ENCODE measurements at regions of chr2 and their contacts with region 1.

Region 1: GRCh38 chr2:202299712-202300111 is 34.1 kb downstream of the NOP58 start:
- DNase-seq: no peak
- ATAC-seq: peak; percentile 54
- H3K4me3 Mint-ChIP-seq: no peak overlapping the region
- H3K27ac Mint-ChIP-seq: peak overlapping the region; percentile 28
- H3K4me1 Mint-ChIP-seq: peaks cover 7% of the 10 kb centered on the region
- H3K27me3 Mint-ChIP-seq: no peaks in the 10 kb centered on the region
- CTCF ChIP-seq: no peak

Region 2: GRCh38 chr2:201490291-201490690 is 809.4 kb before region 1 on chr2:
- CTCF ChIA-PET with region 1: no interaction called
- POLR2A ChIA-PET with region 1: no interaction called
- intact Hi-C with region 1: no loop called
- DNase-seq: no peak
- ATAC-seq: no peak
- H3K4me3 Mint-ChIP-seq: no peak overlapping the region
- H3K27ac Mint-ChIP-seq: no peak overlapping the region
- H3K4me1 Mint-ChIP-seq: no peaks in the 10 kb centered on the region
- H3K27me3 Mint-ChIP-seq: no peaks in the 10 kb centered on the region
- CTCF ChIP-seq: no peak

Region 3: DNA sequence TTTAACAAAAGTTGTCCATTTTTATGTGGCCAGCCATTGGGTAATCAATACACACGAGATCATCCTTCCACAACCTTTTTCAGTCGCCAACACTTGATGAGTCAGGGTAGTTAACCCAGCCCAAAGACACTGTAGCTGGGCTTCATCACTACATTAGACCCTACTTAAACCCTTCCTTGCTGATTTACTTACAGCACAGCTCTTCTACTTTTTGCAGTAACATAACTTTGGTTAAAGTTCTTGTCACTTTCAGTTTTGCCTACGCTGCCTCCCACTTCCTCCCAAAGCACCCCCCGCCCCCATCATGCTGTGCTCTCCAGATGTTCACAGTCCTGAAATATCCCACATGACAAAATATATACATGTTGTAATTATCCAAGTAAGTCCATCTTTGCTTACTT is 389.8 kb before region 1 on chr2:
- CTCF ChIA-PET with region 1: no interaction called
- POLR2A ChIA-PET with region 1: no interaction called
- intact Hi-C with region 1: no loop called
- DNase-seq: no peak
- ATAC-seq: no peak
- H3K4me3 Mint-ChIP-seq: no peak overlapping the region
- H3K27ac Mint-ChIP-seq: no peak overlapping the region
- H3K4me1 Mint-ChIP-seq: peaks cover 10% of the 10 kb centered on the region
- H3K27me3 Mint-ChIP-seq: peaks cover 13% of the 10 kb centered on the region
- CTCF ChIP-seq: no peak

Region 4: GRCh38 chr2:202278944-202279343 is 20.8 kb before region 1 on chr2:
- CTCF ChIA-PET with region 1: no interaction called
- POLR2A ChIA-PET with region 1: interaction called, 5 read pairs
- intact Hi-C with region 1: loop called (anchors 2 kb)
- DNase-seq: no peak
- ATAC-seq: no peak
- H3K4me3 Mint-ChIP-seq: no peak overlapping the region
- H3K27ac Mint-ChIP-seq: no peak overlapping the region
- H3K4me1 Mint-ChIP-seq: peaks cover 10% of the 10 kb centered on the region
- H3K27me3 Mint-ChIP-seq: no peaks in the 10 kb centered on the region
- CTCF ChIP-seq: no peak

Region 5: DNA sequence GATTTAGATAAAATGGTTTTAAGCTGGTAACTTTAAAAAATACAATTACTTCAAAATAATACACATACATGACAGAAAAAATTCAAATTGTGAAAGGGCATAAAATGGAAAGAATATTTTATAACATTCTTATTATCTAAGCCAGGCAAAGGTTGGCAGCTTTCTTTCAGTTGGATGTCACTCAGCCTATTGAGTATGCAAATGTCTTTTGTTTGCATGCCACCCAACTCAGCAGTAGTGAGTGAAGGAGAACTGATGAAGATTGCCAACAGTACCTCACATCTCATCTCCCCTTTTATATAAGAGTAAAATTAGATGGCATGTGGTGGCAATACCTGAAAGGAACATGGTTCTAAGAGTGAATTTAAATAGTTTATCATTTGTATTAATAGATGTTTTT is 101.2 kb after region 1 on chr2:
- CTCF ChIA-PET with region 1: no interaction called
- POLR2A ChIA-PET with region 1: no interaction called
- intact Hi-C with region 1: no loop called
- DNase-seq: no peak
- ATAC-seq: no peak
- H3K4me3 Mint-ChIP-seq: no peak overlapping the region
- H3K27ac Mint-ChIP-seq: no peak overlapping the region
- H3K4me1 Mint-ChIP-seq: peaks cover 4% of the 10 kb centered on the region
- H3K27me3 Mint-ChIP-seq: no peaks in the 10 kb centered on the region
- CTCF ChIP-seq: no peak